Heart right ventricle (tissue), 16 donors: ENCODE measurements at regions of chr21 and their contacts with region 1.

Region 1: DNA sequence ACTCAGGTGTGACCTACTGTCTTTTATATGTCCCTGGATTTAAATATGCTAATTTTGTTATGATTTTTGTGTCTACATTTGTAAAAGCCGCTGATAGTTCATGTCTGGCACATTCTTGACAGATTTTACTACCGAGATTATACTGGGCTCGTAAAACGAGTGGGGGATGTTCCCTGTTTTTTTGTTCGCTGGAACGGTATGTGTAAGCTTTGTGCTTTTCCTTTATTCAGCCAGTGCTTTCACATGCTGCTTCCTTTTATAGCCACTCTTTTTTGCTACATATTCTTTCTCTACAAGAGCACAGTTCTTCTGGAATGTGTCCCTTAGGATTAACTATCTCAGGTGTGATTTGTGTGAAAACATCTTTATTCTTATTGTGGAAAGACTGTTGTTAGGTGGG is 46.6 kb downstream of the ADARB1 start:
- DNase-seq: no peak
- ATAC-seq: no peak
- H3K4me3 ChIP-seq: no peak overlapping the region
- H3K27ac ChIP-seq: no peak overlapping the region
- H3K4me1 ChIP-seq: peaks cover 0 to 22% (median 11%) of the 10 kb centered on the region in 9 donors
- H3K27me3 ChIP-seq: no peaks in the 10 kb centered on the region
- CTCF ChIP-seq: no peak

Region 2: GRCh38 chr21:45091550-45092322 is 29.2 kb before region 1 on chr21:
- intact Hi-C with region 1: loop called in 3 of 10 experiments (anchors 5 kb)
- DNase-seq: no peak
- ATAC-seq: peak in 3 of 8 donors; percentile 28 to 53 (median 40)
- H3K4me3 ChIP-seq: no peak overlapping the region
- H3K27ac ChIP-seq: peak overlapping the region in 9 of 10 donors; percentile 1 to 93 (median 75)
- H3K4me1 ChIP-seq: peaks cover 7 to 74% (median 58%) of the 10 kb centered on the region in 9 donors
- H3K27me3 ChIP-seq: no peaks in the 10 kb centered on the region
- CTCF ChIP-seq: no peak